AG04449 (cell line): ENCODE measurements at regions of chr5 and their contacts with region 1.

Region 1: GRCh38 chr5:37412515-37413277 is 33.6 kb downstream of the WDR70 start:
- DNase-seq: peak; percentile 49
- H3K4me3 ChIP-seq: no peak overlapping the region
- CTCF ChIP-seq: peak; percentile 74

Region 2: DNA sequence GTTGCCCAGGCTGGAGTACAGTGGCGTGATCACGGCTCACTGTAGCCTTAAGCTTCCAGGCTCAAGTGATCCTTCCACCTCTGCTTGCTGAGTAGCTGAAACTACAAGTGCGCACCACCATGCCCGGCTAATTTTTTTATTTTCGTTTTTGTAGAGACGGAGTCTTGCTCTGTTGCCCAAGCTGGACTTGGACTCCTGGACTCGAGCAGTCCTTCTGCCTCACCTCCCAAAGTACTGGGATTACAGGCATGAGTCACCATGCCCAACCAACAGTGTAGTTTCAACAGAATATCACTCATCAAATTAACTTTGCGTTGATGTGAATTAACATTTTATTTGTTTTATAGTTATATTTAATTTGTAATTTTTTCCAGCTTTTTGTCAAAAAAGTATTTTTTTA is 11.7 kb after region 1 on chr5:
- CTCF ChIA-PET with region 1: interaction called, 27 read pairs
- POLR2A ChIA-PET with region 1: no interaction called
- DNase-seq: no peak
- H3K4me3 ChIP-seq: no peak overlapping the region
- CTCF ChIP-seq: no peak

Region 3: GRCh38 chr5:37738057-37738691 is 325.5 kb after region 1 on chr5:
- CTCF ChIA-PET with region 1: interaction called, 22 read pairs
- POLR2A ChIA-PET with region 1: no interaction called
- DNase-seq: peak; percentile 85
- H3K4me3 ChIP-seq: no peak overlapping the region
- CTCF ChIP-seq: no peak

Region 4: GRCh38 chr5:37810311-37810710 is 397.6 kb after region 1 on chr5:
- CTCF ChIA-PET with region 1: interaction called, 13 read pairs
- POLR2A ChIA-PET with region 1: no interaction called
- DNase-seq: no peak
- H3K4me3 ChIP-seq: peak overlapping the region; percentile 50
- CTCF ChIP-seq: no peak

Region 5: DNA sequence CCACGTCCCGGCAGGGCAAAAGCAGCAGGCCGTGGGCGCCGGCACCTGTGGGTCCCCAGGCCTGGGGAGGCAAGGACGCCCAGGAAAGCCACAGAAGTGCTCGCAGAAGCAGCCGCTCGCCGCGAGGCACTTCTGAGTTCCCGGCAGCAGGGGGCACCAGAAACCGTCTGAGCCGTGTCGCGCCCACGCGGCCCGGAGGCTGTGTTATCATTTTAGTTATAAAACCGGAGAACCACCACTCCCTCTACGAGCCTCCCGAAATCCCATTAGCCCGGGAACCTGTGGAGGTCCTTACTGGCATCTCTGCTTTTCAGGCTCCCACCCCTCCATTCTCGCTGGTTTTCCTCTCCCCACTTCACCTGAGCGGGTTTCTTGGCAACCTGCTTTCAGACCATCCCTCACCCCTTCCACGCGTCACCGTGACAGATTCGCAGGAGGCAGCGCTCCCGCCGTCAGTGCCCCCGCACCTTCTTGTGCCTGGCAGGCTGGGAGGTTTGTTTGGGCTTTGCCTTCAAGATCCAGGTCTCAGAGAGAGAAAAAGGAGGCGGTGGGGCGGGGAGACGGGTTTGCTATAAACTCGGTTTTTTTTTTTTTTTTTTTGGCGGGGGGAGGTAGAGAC is 424.8 kb after region 1 on chr5:
- CTCF ChIA-PET with region 1: interaction called, 33 read pairs
- POLR2A ChIA-PET with region 1: no interaction called
- DNase-seq: no peak
- H3K4me3 ChIP-seq: peak overlapping the region; percentile 68
- CTCF ChIP-seq: peak; percentile 88